Ascending aorta (tissue), 2 donors: ENCODE measurements at regions of chr4 and their contacts with region 1.

Region 1: GRCh38 chr4:95510145-95510544 is 38.6 kb downstream of the UNC5C start:
- DNase-seq: no peak
- H3K4me3 ChIP-seq: no peak overlapping the region
- H3K27ac ChIP-seq: no peak overlapping the region
- H3K4me1 ChIP-seq: peaks cover 0 to 3% of the 10 kb centered on the region in 2 donors
- H3K27me3 ChIP-seq: no peaks in the 10 kb centered on the region
- CTCF ChIP-seq: peak in 2 of 3 experiments; percentile 43 to 56

Region 2: GRCh38 chr4:95619525-95620443 is 109.6 kb after region 1 on chr4:
- intact Hi-C with region 1: loop called (anchors 5 kb)
- DNase-seq: no peak
- H3K4me3 ChIP-seq: no peak overlapping the region
- H3K27ac ChIP-seq: peak overlapping the region; percentile 42 to 55
- H3K4me1 ChIP-seq: peaks cover 0 to 8% of the 10 kb centered on the region in 2 donors
- H3K27me3 ChIP-seq: no peaks in the 10 kb centered on the region
- CTCF ChIP-seq: no peak